ENCODE measurements at regions of chr1 and their contacts with region 1.

Region 1: GRCh38 chr1:65751961-65752360 is 40.7 kb upstream of the PDE4B start:
- DNase-seq: no peak
- H3K4me3 ChIP-seq: no peak overlapping the region
- H3K27ac ChIP-seq: no peak overlapping the region
- H3K4me1 ChIP-seq: no peaks in the 10 kb centered on the region
- H3K27me3 ChIP-seq: no peaks in the 10 kb centered on the region
- CTCF ChIP-seq: no peak

Region 2: DNA sequence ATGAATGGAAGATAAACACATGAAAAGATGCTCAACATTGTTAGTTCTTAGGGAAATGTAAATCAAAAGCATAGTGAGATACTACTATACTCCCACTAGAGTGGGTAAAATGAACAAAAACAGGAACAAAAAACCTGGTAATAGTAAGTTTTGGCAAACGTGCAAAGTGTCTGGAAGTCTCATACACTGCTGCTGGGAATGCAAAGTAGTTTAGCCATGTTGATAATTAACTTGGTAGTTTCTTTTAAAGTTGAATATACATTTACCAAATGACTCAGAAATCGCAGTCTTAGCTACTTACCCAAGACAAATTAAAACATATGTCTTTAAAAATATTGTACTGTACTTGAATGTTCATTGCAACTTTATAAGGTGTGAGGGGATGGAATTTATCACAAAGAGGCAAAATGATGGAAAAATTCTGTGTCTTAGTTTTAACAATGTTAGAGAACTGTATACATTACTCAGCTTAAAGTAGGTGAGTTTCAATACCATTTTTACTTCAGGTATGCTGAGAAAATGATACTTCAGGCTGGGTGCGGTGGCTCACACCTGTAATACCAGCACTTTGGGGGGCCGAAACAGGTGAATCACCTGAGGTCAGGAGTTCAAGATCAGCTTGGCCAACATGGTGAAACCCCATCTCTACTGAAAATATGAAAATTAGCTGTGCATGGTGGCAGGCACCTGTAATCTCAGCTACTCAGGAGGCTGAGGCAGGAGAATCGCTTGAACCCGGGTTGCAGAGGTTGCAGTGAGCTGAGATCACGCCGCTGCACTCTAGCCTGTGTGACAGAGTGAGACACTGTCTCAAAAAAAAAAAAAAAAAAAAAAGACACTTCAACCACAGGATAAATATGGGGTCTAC is 143.0 kb after region 1 on chr1:
- CTCF ChIA-PET with region 1: no interaction called
- POLR2A ChIA-PET with region 1: interaction called, 33 read pairs
- intact Hi-C with region 1: no loop called
- DNase-seq: no peak
- H3K4me3 ChIP-seq: no peak overlapping the region
- H3K27ac ChIP-seq: no peak overlapping the region
- H3K4me1 ChIP-seq: no peaks in the 10 kb centered on the region
- H3K27me3 ChIP-seq: no peaks in the 10 kb centered on the region
- CTCF ChIP-seq: no peak